ENCODE measurements at regions of chr4 and their contacts with region 1.

Region 1: GRCh38 chr4:107937040-107937785 is 5.9 kb downstream of the CYP2U1 start:
- DNase-seq: no peak
- H3K4me3 ChIP-seq: no peak overlapping the region
- H3K27ac ChIP-seq: no peak overlapping the region
- H3K4me1 ChIP-seq: no peaks in the 10 kb centered on the region
- H3K27me3 ChIP-seq: no peaks in the 10 kb centered on the region
- CTCF ChIP-seq: no peak

Region 2: GRCh38 chr4:107666134-107666533 is 271.1 kb before region 1 on chr4:
- intact Hi-C with region 1: no loop called
- DNase-seq: no peak
- H3K4me3 ChIP-seq: no peak overlapping the region
- H3K27ac ChIP-seq: no peak overlapping the region
- H3K4me1 ChIP-seq: no peaks in the 10 kb centered on the region
- H3K27me3 ChIP-seq: no peaks in the 10 kb centered on the region
- CTCF ChIP-seq: no peak

Region 3: GRCh38 chr4:107978716-107979451 is 41.7 kb after region 1 on chr4:
- intact Hi-C with region 1: loop called (anchors 5 kb)
- DNase-seq: no peak
- H3K4me3 ChIP-seq: no peak overlapping the region
- H3K27ac ChIP-seq: no peak overlapping the region
- H3K4me1 ChIP-seq: no peaks in the 10 kb centered on the region
- H3K27me3 ChIP-seq: no peaks in the 10 kb centered on the region
- CTCF ChIP-seq: no peak